Psoas muscle (tissue), 8 donors: ENCODE measurements at regions of chr7 and their contacts with region 1.

Region 1: GRCh38 chr7:51141451-51142003 is 175.1 kb downstream of the COBL start:
- DNase-seq: no peak
- ATAC-seq: peak; percentile 43 to 65 (median 48)
- H3K4me3 ChIP-seq: no peak overlapping the region
- H3K27ac ChIP-seq: peak overlapping the region; percentile 20
- H3K4me1 ChIP-seq: peaks cover 6% of the 10 kb centered on the region
- H3K27me3 ChIP-seq: no peaks in the 10 kb centered on the region
- CTCF ChIP-seq: peak; percentile 56

Region 2: GRCh38 chr7:50610521-50611277 is 530.8 kb before region 1 on chr7:
- intact Hi-C with region 1: loop called in 1 of 2 experiments (anchors 10 kb)
- DNase-seq: no peak
- ATAC-seq: no peak
- H3K4me3 ChIP-seq: no peak overlapping the region
- H3K27ac ChIP-seq: no peak overlapping the region
- H3K4me1 ChIP-seq: no peaks in the 10 kb centered on the region
- H3K27me3 ChIP-seq: no peaks in the 10 kb centered on the region
- CTCF ChIP-seq: no peak

Region 3: DNA sequence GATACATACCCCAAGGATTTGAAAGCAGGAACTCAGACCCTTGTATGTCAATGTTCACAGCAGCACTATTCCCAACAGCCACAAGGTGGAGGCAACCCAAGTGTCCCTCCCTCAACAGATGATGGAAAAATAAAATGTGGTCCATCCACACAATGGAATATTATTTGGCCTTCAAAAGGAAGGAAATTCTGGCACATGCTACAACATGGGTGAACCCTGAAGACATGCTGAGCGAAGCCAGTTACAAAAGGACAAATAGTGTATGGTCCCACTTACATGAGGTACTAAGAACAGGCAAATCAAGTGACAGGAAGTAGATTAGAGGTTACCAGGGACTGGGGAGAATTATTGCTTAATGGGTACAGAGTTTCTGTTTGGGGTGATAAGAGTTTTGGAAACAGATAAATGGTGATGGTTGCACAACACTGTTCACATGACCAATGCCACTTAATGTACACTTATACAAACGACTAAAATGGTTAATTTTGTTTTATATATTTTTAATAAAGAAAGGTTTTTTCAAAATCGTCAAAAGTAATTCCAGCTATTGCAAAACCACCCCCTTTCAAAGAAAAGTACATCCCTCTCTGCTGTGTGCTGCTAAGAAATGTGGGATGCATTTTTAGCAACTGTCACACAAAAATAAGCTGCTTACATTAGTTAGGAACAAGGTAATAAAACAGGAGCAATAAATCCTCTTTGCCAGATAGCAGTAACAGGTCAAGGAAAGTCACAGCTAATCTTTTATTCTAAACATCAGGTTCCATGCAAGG is 444.5 kb before region 1 on chr7:
- intact Hi-C with region 1: loop called in 1 of 2 experiments (anchors 10 kb)
- DNase-seq: no peak
- ATAC-seq: peak in 2 of 4 donors; percentile 53 to 55
- H3K4me3 ChIP-seq: no peak overlapping the region
- H3K27ac ChIP-seq: no peak overlapping the region
- H3K4me1 ChIP-seq: no peaks in the 10 kb centered on the region
- H3K27me3 ChIP-seq: no peaks in the 10 kb centered on the region
- CTCF ChIP-seq: peak; percentile 47

Region 4: GRCh38 chr7:50782384-50783208 is 358.9 kb before region 1 on chr7 and contains the start of gene GRB10:
- intact Hi-C with region 1: loop called in 1 of 2 experiments (anchors 10 kb)
- DNase-seq: peak; percentile 55 to 65
- ATAC-seq: peak; percentile 55 to 79 (median 76)
- H3K4me3 ChIP-seq: peak within 1 kb of the TSS; percentile 68
- H3K27ac ChIP-seq: peak within 1 kb of the TSS; percentile 24
- H3K4me1 ChIP-seq: peaks cover 53% of the 10 kb centered on the region
- H3K27me3 ChIP-seq: no peaks in the 10 kb centered on the region
- CTCF ChIP-seq: no peak
- total RNA-seq, gene GRB10: 44.5 to 60.5 (median 56.1) TPM